ENCODE measurements at regions of chr19 and their contacts with region 1.

Region 1: GRCh38 chr19:55117636-55118391 is at the start of gene PPP1R12C:
- DNase-seq: peak; percentile 94 to 97 (median 96)
- H3K4me3 ChIP-seq: peak within 1 kb of the TSS; percentile 96 to 97
- H3K4me3 Mint-ChIP-seq: peak within 1 kb of the TSS; percentile 98 to 100 (median 99)
- H3K27ac ChIP-seq: peak within 1 kb of the TSS; percentile 73
- H3K27ac Mint-ChIP-seq: peak within 1 kb of the TSS; percentile 96 to 99 (median 98)
- H3K4me1 ChIP-seq: peaks cover 31% of the 10 kb centered on the region
- H3K4me1 Mint-ChIP-seq: peaks cover 15 to 53% (median 34%) of the 10 kb centered on the region in 4 donors
- H3K27me3 ChIP-seq: no peaks in the 10 kb centered on the region
- H3K27me3 Mint-ChIP-seq: peaks cover 3 to 6% of the 10 kb centered on the region in 2 donors
- total RNA-seq, gene PPP1R12C: 165 TPM

Region 2: DNA sequence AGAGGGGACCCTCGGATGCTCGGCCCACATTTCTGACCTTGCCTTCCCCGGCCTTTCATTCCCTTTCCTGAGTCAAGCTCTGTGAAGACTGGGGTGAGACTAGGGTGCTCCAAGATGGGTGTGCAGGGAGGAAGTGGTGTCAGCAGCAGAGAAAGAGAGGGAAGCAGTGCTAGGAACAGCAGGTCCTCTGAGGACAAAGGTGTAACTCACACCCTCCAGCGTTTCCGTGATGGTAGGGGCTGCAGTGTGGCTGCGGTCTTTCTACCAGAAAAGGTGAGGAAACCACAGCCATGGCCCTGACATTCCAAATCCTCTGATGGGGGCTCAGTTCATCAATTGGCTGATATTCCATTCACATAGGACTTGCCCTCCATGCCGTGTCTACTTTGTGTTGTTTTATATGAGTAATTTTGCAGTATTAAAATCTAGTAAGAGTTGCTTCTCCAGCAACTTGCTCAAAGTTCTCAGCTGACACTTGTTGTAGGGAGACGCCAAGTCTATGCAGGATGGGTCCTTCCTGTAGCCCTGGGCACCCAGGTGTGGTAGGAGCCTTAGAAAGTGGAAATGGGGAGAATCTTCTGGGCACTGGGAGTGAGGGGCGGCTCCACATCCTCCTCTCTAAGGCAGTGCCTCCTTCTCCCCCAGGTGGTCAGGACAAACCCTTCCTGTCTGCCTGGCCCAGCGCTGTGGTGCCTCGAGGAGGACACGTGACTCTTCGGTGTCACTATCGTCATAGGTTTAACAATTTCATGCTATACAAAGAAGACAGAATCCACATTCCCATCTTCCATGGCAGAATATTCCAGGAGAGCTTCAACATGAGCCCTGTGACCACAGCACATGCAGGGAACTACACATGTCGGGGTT is 299.9 kb before region 1 on chr19:
- CTCF ChIA-PET with region 1: no interaction called
- POLR2A ChIA-PET with region 1: no interaction called
- intact Hi-C with region 1: no loop called
- DNase-seq: no peak
- H3K4me3 ChIP-seq: no peak overlapping the region
- H3K4me3 Mint-ChIP-seq: no peak overlapping the region
- H3K27ac ChIP-seq: no peak overlapping the region
- H3K27ac Mint-ChIP-seq: no peak overlapping the region
- H3K4me1 ChIP-seq: no peaks in the 10 kb centered on the region
- H3K4me1 Mint-ChIP-seq: no peaks in the 10 kb centered on the region
- H3K27me3 ChIP-seq: no peaks in the 10 kb centered on the region
- H3K27me3 Mint-ChIP-seq: peaks cover 1 to 14% of the 10 kb centered on the region in 2 donors

Region 3: GRCh38 chr19:55005684-55006488 is 111.9 kb before region 1 on chr19:
- CTCF ChIA-PET with region 1: no interaction called
- POLR2A ChIA-PET with region 1: no interaction called
- intact Hi-C with region 1: no loop called
- DNase-seq: peak; percentile 80 to 93 (median 87)
- H3K4me3 ChIP-seq: peak overlapping the region; percentile 26 to 35
- H3K4me3 Mint-ChIP-seq: peak overlapping the region; percentile 74 to 91 (median 86)
- H3K27ac ChIP-seq: peak overlapping the region; percentile 57
- H3K27ac Mint-ChIP-seq: peak overlapping the region; percentile 87 to 98 (median 93)
- H3K4me1 ChIP-seq: peaks cover 14% of the 10 kb centered on the region
- H3K4me1 Mint-ChIP-seq: peaks cover 14 to 49% (median 25%) of the 10 kb centered on the region in 4 donors
- H3K27me3 ChIP-seq: no peaks in the 10 kb centered on the region
- H3K27me3 Mint-ChIP-seq: peaks cover 5 to 17% of the 10 kb centered on the region in 2 donors

Region 4: DNA sequence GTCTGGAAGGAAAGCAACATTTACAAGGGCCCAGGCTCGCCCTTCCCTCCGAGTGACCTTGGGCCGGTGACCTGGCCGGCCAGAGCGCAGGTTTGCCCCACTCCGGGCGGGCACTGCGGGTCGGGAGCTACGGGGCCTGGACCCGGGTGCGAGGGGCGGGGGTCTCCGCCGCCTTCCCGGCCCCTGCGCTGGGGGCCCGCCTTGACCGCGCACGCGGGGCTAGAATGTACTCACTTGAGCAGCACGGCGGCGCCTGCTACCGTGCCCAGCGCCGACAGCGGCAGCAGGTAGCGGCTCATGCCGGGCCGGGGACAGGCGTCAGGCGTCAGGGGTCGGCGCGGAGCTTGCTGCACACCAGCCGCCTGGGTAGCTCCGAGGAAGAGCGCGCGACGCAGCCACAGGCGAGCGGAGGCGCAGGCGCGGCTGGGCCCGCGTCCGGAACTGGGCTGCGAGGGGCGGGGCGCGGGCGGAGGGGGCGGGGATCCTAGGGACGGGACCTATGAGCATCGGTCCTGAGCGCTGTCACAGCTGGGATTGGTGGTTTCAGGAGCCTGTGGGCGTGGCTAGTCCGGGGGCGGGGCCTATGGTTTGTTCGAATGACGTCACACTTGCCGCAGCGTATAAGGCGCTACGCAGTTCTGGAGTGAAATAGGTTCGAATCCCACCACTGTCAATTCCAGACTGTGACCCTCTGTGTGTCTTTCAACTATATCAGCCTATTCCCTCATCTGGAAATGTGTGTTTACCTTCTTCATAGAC is 54.9 kb before region 1 on chr19 and contains the start of gene RDH13:
- CTCF ChIA-PET with region 1: no interaction called
- POLR2A ChIA-PET with region 1: interaction called, 10 read pairs
- intact Hi-C with region 1: loop called (anchors 1 kb)
- DNase-seq: peak; percentile 94 to 97 (median 97)
- H3K4me3 ChIP-seq: peak within 1 kb of the TSS; percentile 23 to 84
- H3K4me3 Mint-ChIP-seq: peak within 1 kb of the TSS; percentile 84 to 90 (median 87)
- H3K27ac ChIP-seq: peak within 1 kb of the TSS; percentile 62
- H3K27ac Mint-ChIP-seq: peak within 1 kb of the TSS; percentile 47 to 90 (median 84)
- H3K4me1 ChIP-seq: peaks cover 15% of the 10 kb centered on the region
- H3K4me1 Mint-ChIP-seq: peaks cover 8 to 21% (median 11%) of the 10 kb centered on the region in 4 donors
- H3K27me3 ChIP-seq: no peaks in the 10 kb centered on the region
- H3K27me3 Mint-ChIP-seq: peaks cover 15 to 23% of the 10 kb centered on the region in 2 donors
- total RNA-seq, gene RDH13: 23.9 to 27.4 TPM

Region 5: DNA sequence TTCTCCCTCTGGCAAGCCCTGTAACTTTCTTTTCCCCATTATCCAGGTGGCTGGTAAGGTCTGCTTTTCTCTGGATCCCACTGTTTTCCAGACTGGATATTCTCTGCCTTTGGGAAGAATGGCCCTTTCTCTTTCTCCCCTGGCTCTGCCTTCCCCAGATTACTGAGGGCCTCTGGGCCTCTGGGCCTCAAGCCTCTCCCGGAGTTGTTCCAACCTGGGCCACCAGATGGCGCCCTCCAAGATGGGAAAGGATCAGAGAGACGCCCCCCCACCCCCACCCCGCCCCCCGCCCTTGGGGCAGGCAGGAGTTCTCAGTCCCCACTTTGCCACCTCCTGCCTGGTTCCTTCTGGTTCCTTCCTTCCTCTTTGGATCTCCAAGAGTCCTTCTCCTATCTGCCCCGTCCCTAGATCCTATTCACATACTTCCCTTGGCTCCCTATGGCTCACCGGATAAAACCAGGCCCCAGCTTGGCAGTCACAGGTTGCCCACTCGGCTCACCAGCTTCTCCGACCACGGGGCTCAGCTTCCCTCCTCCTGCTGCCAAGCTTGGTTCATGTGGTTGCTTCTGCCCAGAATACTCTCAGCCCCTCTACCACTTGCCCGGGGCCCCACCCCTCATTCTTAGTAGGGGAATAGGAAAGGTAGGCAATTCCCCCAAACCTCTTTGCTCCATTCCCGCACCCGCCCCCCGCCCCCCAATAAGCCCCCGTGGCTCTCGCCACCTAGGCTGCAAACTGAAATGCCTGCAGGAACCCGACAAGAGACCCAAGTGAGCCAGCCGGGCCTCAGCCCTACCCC is 29.1 kb before region 1 on chr19:
- CTCF ChIA-PET with region 1: interaction called, 3 read pairs
- POLR2A ChIA-PET with region 1: interaction called, 12 read pairs
- intact Hi-C with region 1: loop called (anchors 2 kb)
- DNase-seq: peak; percentile 56 to 71 (median 59)
- H3K4me3 ChIP-seq: no peak overlapping the region
- H3K4me3 Mint-ChIP-seq: peak overlapping the region; percentile 18 to 89 (median 68)
- H3K27ac ChIP-seq: no peak overlapping the region
- H3K27ac Mint-ChIP-seq: peak overlapping the region in 2 of 7 donors; percentile 68 to 71
- H3K4me1 ChIP-seq: peaks cover 22% of the 10 kb centered on the region
- H3K4me1 Mint-ChIP-seq: peaks cover 12 to 35% (median 18%) of the 10 kb centered on the region in 4 donors
- H3K27me3 ChIP-seq: peaks cover 12% of the 10 kb centered on the region
- H3K27me3 Mint-ChIP-seq: peaks cover 23 to 41% of the 10 kb centered on the region in 2 donors

Region 6: DNA sequence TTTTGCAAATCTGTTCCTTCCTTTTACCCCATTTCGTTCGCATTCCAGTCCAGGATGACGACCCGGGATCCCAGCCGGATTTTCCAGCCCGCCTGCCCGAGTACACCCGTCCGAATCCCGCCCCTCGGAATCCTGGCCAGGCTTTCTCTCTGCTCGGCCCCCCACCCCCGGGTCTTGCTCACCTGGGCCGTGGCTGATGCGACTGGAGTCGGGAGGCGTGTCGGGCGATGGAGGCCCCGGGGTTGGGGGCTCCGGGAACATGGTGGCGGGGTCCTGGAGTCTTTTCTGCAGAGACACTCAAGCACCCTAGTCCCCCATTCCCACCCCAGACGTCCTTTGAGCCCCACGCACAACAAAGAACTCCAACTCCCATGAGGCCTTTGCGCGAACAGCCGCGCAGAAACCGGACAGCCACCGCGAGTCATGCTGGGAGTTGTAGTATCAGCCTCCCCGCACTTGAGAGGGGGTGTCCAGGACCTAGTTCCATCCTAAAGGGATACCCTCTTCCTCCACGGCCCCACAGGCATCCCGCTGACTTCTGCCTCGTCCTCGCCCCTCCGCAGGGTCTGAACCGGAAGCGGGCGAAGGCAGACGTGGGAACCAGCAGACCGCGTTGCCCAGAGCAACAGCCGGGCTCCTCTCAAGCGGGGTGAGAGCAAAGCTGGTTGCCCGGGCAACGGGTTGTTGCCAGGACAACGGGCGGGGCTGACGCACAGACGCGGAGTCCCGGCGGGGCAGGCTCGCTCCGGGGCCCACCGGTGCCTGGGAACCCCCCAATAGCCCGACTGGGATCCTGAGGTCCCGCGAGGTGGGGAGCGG is 61.2 kb after region 1 on chr19:
- CTCF ChIA-PET with region 1: no interaction called
- POLR2A ChIA-PET with region 1: no interaction called
- intact Hi-C with region 1: loop called (anchors 1 kb)
- DNase-seq: peak; percentile 94 to 98 (median 95)
- H3K4me3 ChIP-seq: peak overlapping the region; percentile 42 to 63
- H3K4me3 Mint-ChIP-seq: peak overlapping the region; percentile 66 to 88 (median 83)
- H3K27ac ChIP-seq: peak overlapping the region; percentile 46
- H3K27ac Mint-ChIP-seq: peak overlapping the region; percentile 87 to 99 (median 96)
- H3K4me1 ChIP-seq: peaks cover 30% of the 10 kb centered on the region
- H3K4me1 Mint-ChIP-seq: peaks cover 12 to 37% (median 23%) of the 10 kb centered on the region in 4 donors
- H3K27me3 ChIP-seq: peaks cover 50% of the 10 kb centered on the region
- H3K27me3 Mint-ChIP-seq: peaks cover 45 to 61% of the 10 kb centered on the region in 2 donors

Region 7: GRCh38 chr19:55189424-55189823 is 71.6 kb after region 1 on chr19:
- CTCF ChIA-PET with region 1: no interaction called
- POLR2A ChIA-PET with region 1: no interaction called
- intact Hi-C with region 1: no loop called
- DNase-seq: no peak
- H3K4me3 ChIP-seq: no peak overlapping the region
- H3K4me3 Mint-ChIP-seq: no peak overlapping the region
- H3K27ac ChIP-seq: no peak overlapping the region
- H3K27ac Mint-ChIP-seq: peak overlapping the region in 3 of 7 donors; percentile 19 to 70 (median 30)
- H3K4me1 ChIP-seq: no peaks in the 10 kb centered on the region
- H3K4me1 Mint-ChIP-seq: peaks cover 0 to 9% (median 5%) of the 10 kb centered on the region in 4 donors
- H3K27me3 ChIP-seq: no peaks in the 10 kb centered on the region
- H3K27me3 Mint-ChIP-seq: peaks cover 9 to 17% of the 10 kb centered on the region in 2 donors

Region 8: GRCh38 chr19:55674841-55675660 is 557.2 kb after region 1 on chr19 and contains the start of gene EPN1:
- CTCF ChIA-PET with region 1: no interaction called
- POLR2A ChIA-PET with region 1: no interaction called
- intact Hi-C with region 1: loop called (anchors 1 kb)
- DNase-seq: peak; percentile 94 to 98 (median 97)
- H3K4me3 ChIP-seq: peak within 1 kb of the TSS; percentile 79 to 98
- H3K4me3 Mint-ChIP-seq: peak within 1 kb of the TSS; percentile 94 to 100 (median 97)
- H3K27ac ChIP-seq: peak within 1 kb of the TSS; percentile 94
- H3K27ac Mint-ChIP-seq: peak within 1 kb of the TSS; percentile 94 to 100 (median 99)
- H3K4me1 ChIP-seq: peaks cover 63% of the 10 kb centered on the region
- H3K4me1 Mint-ChIP-seq: peaks cover 32 to 74% (median 55%) of the 10 kb centered on the region in 4 donors
- H3K27me3 ChIP-seq: no peaks in the 10 kb centered on the region
- H3K27me3 Mint-ChIP-seq: no peaks in the 10 kb centered on the region
- total RNA-seq, gene EPN1: 53.9 to 56.9 TPM